ENCODE measurements at regions of chr1 and their contacts with region 1.

Region 1: GRCh38 chr1:65075123-65075976 is 72.7 kb upstream of the AK4 start:
- DNase-seq: peak; percentile 36 to 89 (median 57)
- ATAC-seq: peak; percentile 99
- H3K4me3 ChIP-seq: no peak overlapping the region
- H3K4me3 Mint-ChIP-seq: no peak overlapping the region
- H3K27ac ChIP-seq: no peak overlapping the region
- H3K27ac Mint-ChIP-seq: no peak overlapping the region
- H3K4me1 ChIP-seq: no peaks in the 10 kb centered on the region
- H3K4me1 Mint-ChIP-seq: peaks cover 21% of the 10 kb centered on the region
- H3K27me3 ChIP-seq: no peaks in the 10 kb centered on the region
- H3K27me3 Mint-ChIP-seq: no peaks in the 10 kb centered on the region
- CTCF ChIP-seq: peak; percentile 83

Region 2: DNA sequence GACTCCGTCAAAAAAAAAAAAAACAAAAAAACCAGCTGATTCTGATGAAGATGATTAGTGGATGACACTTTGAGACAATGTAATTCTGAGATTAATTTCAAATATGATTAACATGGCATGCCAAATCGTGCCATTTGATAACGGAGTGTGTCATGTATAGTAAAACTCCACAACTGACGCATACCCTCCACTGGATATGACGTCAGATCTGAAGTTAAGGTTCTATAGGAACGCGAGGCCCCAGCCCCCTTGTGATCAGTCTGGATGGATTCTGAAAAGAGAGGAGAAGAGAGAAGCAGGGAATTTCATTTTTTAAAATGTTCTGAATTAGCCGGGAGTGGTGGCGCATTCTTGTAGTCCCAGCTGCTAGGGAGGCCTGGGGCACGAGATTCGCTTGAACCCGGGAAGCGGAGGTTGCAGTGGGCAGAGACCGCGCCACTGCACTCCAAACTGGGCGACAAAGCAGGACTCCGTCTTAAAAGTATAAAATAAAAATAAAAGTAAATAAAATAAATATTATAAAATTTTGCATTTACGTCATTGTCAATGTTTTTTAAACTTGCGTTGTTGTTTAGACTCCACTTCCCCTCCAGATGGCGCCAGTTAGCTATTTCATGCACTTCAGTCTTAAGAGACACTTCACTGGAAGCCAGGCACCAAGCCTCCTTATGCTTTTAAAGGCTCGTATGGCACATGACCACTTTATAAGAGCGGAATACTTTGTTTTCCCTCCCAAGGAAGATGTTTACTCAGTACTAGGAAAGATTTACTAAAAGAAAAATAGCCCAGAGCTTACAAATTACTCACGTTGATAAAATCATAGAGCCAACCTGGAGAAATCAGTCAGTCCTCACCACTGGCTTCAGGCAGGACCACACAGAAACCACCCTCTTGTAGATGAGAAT is 806.4 kb before region 1 on chr1:
- CTCF ChIA-PET with region 1: no interaction called
- POLR2A ChIA-PET with region 1: interaction called, 3 read pairs
- intact Hi-C with region 1: loop called (anchors 2 to 10 kb)
- DNase-seq: peak; percentile 19 to 83 (median 56)
- ATAC-seq: peak; percentile 71
- H3K4me3 ChIP-seq: no peak overlapping the region
- H3K4me3 Mint-ChIP-seq: no peak overlapping the region
- H3K27ac ChIP-seq: no peak overlapping the region
- H3K27ac Mint-ChIP-seq: no peak overlapping the region
- H3K4me1 ChIP-seq: no peaks in the 10 kb centered on the region
- H3K4me1 Mint-ChIP-seq: no peaks in the 10 kb centered on the region
- H3K27me3 ChIP-seq: peaks cover 0 to 10% of the 10 kb centered on the region in 2 experiments
- H3K27me3 Mint-ChIP-seq: peaks cover 45% of the 10 kb centered on the region
- CTCF ChIP-seq: peak; percentile 84

Region 3: DNA sequence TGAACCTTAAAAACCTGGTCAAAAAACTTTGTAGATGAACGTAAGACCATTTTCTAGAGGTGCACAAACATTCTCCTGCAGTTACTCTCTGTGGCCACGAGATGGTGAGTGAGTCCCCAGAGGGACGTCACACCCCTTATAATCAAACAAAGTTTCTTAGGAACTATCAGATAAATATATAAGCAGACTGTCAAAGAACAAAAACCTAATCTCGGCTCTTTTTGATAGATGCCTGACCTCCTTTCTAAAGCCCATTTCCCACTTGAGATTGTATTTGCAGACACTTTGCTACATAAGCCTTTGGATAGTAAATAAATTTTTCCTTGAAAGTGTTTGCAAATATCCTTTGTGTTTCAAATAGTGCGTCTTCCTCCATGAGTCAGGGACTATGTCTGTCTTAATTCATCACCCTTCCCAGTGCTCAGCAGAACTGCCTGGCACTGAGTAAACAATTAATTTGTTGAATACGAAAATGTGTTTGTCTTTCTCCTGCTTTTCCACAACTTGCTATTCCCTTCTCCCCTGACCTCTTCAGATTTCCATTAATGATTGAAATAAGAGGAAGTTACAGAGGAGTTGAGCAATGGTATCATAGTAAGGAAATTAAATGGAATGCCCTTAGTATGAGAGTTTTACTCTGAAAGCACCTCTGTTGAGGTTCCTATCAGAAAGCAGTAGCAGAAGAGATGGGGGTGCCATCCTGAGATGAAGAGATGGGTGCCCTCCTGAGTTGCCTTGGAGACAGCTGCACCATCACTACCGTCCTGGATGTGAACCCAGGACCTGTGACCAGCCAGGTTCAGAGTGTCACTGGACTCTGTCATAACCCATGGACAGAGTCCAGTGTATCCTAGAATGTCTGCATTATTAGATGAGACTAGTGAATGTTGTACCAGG is 388.3 kb before region 1 on chr1:
- CTCF ChIA-PET with region 1: no interaction called
- POLR2A ChIA-PET with region 1: no interaction called
- intact Hi-C with region 1: loop called (anchors 2 to 5 kb)
- DNase-seq: peak in 8 of 14 experiments; percentile 2 to 67 (median 30)
- ATAC-seq: peak; percentile 90
- H3K4me3 ChIP-seq: no peak overlapping the region
- H3K4me3 Mint-ChIP-seq: no peak overlapping the region
- H3K27ac ChIP-seq: no peak overlapping the region
- H3K27ac Mint-ChIP-seq: no peak overlapping the region
- H3K4me1 ChIP-seq: no peaks in the 10 kb centered on the region
- H3K4me1 Mint-ChIP-seq: no peaks in the 10 kb centered on the region
- H3K27me3 ChIP-seq: no peaks in the 10 kb centered on the region
- H3K27me3 Mint-ChIP-seq: no peaks in the 10 kb centered on the region
- CTCF ChIP-seq: peak; percentile 77

Region 4: DNA sequence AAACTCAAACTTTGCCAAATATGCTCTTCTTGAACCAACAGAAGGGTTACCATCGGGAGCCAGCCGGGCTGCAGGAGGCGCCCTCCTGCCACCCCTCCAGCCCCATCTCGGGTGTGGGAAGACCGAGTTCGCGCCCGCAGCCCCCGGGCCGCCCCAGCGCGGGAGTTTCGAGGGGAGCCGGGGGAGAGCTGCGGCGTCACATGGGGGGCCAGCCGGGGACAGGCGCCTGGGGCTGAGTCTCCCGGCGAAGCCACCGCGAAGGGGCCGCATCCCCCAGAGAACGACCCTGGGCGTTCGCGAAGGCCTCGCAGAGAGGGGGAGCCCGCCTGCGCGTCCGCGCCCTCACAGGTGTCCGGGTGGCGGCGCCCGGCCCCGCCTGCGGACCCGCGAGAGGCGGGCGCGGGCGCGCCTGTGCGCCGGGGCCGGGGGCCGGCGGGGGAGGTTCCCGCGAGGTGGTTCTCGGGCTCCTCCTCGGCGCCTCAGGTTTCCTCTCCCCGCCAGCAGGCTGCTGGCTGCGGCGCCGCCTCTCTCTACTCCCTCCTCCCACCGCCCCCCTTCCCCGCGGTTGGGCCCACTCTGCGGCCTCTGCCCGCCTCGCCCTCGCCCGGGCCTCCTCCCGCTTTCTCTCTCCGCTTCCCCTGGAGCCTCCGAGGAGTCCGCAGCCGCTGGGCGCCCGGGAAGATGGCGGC is 330.7 kb before region 1 on chr1 and contains the start of gene RAVER2:
- CTCF ChIA-PET with region 1: no interaction called
- POLR2A ChIA-PET with region 1: interaction called, 4 read pairs
- intact Hi-C with region 1: loop called in 1 of 2 experiments (anchors 10 kb)
- DNase-seq: peak; percentile 14 to 82 (median 46)
- ATAC-seq: peak; percentile 84
- H3K4me3 ChIP-seq: peak within 1 kb of the TSS; percentile 58
- H3K4me3 Mint-ChIP-seq: peak within 1 kb of the TSS; percentile 98
- H3K27ac ChIP-seq: peak within 1 kb of the TSS in 1 of 2 donors; percentile 17
- H3K27ac Mint-ChIP-seq: peak within 1 kb of the TSS; percentile 69
- H3K4me1 ChIP-seq: peaks cover 15% of the 10 kb centered on the region
- H3K4me1 Mint-ChIP-seq: peaks cover 24% of the 10 kb centered on the region
- H3K27me3 ChIP-seq: no peaks in the 10 kb centered on the region
- H3K27me3 Mint-ChIP-seq: peaks cover 5% of the 10 kb centered on the region
- CTCF ChIP-seq: peak; percentile 24
- total RNA-seq, gene RAVER2: 0.80 to 1.0 TPM

Region 5: DNA sequence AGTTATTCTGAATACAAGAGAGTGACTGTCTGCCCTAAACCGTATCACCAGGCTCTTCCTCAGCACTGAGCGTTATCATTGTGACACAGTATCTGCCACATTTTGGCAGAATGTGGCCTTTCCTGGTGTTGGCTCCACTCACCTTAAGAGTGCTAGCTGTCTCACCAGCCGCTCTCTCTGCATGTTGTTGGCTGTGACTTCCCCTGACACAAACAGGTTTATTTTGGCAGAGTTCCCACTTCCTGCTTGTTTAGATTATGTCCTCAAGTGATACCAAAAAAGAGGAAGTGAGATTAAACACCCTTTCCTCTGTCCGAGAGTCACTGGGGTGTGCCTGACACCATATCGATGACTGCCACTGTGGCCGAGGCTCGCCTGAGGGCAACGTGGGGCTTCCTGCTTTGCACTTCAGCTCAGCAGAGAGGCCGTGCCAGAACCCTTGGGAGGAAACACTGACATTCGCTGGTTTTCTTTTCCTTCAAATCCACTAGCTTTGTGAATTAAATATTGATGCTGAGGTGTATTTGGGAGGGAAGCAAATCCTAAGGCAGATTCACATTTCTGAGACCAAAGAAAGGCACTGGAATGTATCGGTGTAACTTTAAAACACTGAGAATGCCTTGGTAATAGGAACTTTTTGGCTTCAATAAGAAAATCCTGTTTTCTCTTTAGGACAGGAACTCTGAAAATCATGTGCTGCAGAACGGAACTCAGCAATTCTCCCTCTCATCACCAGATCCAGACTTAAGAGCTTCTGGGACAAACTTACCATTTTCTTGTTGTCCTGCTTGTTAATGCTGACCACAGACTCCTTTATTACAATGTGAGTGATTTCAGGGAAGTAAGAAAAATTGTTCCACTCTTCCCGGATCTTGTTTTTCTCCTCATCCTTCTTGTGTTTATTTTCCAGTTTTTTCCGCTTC is 211.1 kb before region 1 on chr1:
- CTCF ChIA-PET with region 1: interaction called, 3 read pairs
- POLR2A ChIA-PET with region 1: no interaction called
- intact Hi-C with region 1: loop called in 1 of 2 experiments (anchors 5 kb)
- DNase-seq: peak in 13 of 14 experiments; percentile 11 to 92 (median 36)
- ATAC-seq: peak; percentile 76
- H3K4me3 ChIP-seq: no peak overlapping the region
- H3K4me3 Mint-ChIP-seq: peak overlapping the region; percentile 0
- H3K27ac ChIP-seq: peak overlapping the region in 1 of 2 donors; percentile 68
- H3K27ac Mint-ChIP-seq: peak overlapping the region; percentile 68
- H3K4me1 ChIP-seq: peaks cover 31% of the 10 kb centered on the region
- H3K4me1 Mint-ChIP-seq: peaks cover 56% of the 10 kb centered on the region
- H3K27me3 ChIP-seq: no peaks in the 10 kb centered on the region
- H3K27me3 Mint-ChIP-seq: no peaks in the 10 kb centered on the region
- CTCF ChIP-seq: no peak

Region 6: GRCh38 chr1:65048335-65048734 is 27.0 kb before region 1 on chr1:
- CTCF ChIA-PET with region 1: interaction called, 12 read pairs
- POLR2A ChIA-PET with region 1: interaction called, 5 read pairs
- intact Hi-C with region 1: no loop called
- DNase-seq: no peak
- ATAC-seq: no peak
- H3K4me3 ChIP-seq: no peak overlapping the region
- H3K4me3 Mint-ChIP-seq: no peak overlapping the region
- H3K27ac ChIP-seq: no peak overlapping the region
- H3K27ac Mint-ChIP-seq: peak overlapping the region; percentile 39
- H3K4me1 ChIP-seq: peaks cover 34% of the 10 kb centered on the region
- H3K4me1 Mint-ChIP-seq: peaks cover 69% of the 10 kb centered on the region
- H3K27me3 ChIP-seq: no peaks in the 10 kb centered on the region
- H3K27me3 Mint-ChIP-seq: no peaks in the 10 kb centered on the region
- CTCF ChIP-seq: no peak

Region 7: DNA sequence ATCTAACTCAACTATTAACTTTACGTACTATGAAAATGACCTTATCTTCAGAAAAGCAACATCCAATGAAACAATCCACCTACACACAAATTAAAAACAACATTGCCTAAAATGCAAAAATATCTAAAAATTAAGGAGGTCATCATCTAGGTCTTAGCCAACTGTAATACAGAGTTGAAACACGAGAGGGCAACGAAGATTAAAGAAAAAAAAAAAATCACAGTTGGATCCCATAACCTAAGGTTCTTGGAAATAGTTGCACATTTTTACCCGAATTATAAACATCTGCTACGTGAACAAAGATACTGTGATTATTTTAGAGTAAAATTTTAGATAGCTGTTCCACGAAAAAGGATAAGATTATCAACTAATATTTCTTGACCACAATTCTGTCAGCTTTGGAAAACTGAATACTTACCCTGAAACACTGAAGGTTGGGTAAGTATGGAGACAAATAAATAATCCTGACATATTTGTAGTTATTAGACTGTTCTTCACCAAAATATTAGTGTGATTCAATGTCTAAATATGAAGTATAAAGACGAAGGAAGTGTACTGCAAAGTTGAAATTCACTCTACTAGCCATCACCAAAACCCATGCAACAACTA is 15.3 kb before region 1 on chr1:
- CTCF ChIA-PET with region 1: interaction called, 91 read pairs
- POLR2A ChIA-PET with region 1: interaction called, 30 read pairs
- intact Hi-C with region 1: loop called (anchors 1 kb)
- DNase-seq: peak in 3 of 14 experiments; percentile 40 to 62 (median 61)
- ATAC-seq: peak; percentile 60
- H3K4me3 ChIP-seq: no peak overlapping the region
- H3K4me3 Mint-ChIP-seq: peak overlapping the region; percentile 1
- H3K27ac ChIP-seq: no peak overlapping the region
- H3K27ac Mint-ChIP-seq: peak overlapping the region; percentile 70
- H3K4me1 ChIP-seq: peaks cover 11% of the 10 kb centered on the region
- H3K4me1 Mint-ChIP-seq: peaks cover 63% of the 10 kb centered on the region
- H3K27me3 ChIP-seq: no peaks in the 10 kb centered on the region
- H3K27me3 Mint-ChIP-seq: no peaks in the 10 kb centered on the region
- CTCF ChIP-seq: peak; percentile 69

Region 8: DNA sequence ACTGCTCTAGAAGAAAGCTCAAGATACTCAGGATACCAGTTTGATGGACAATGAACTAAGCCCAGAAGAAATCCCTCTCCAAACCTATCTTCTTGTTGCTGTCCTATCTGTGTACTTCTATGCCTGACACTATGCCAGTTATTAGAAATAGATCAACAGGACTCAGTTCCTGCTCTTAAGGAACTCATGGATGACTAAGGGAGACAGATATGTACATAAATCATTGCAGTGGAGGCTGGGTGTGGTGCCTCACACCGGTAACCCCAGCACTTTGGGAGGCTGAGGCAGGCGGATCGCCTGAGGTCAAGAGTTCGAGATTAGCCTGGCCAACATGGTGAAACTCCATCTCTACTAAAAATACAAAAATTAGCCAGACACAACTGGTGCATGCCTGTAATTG is 30.2 kb after region 1 on chr1:
- CTCF ChIA-PET with region 1: no interaction called
- POLR2A ChIA-PET with region 1: no interaction called
- intact Hi-C with region 1: no loop called
- DNase-seq: no peak
- ATAC-seq: no peak
- H3K4me3 ChIP-seq: no peak overlapping the region
- H3K4me3 Mint-ChIP-seq: no peak overlapping the region
- H3K27ac ChIP-seq: no peak overlapping the region
- H3K27ac Mint-ChIP-seq: no peak overlapping the region
- H3K4me1 ChIP-seq: no peaks in the 10 kb centered on the region
- H3K4me1 Mint-ChIP-seq: no peaks in the 10 kb centered on the region
- H3K27me3 ChIP-seq: peaks cover 0 to 6% of the 10 kb centered on the region in 2 experiments
- H3K27me3 Mint-ChIP-seq: peaks cover 11% of the 10 kb centered on the region
- CTCF ChIP-seq: no peak